Activated T-helper 1 cell treated with anti-CD3 and anti-CD28 coated beads, Interleukin-12 subunit alpha, Interleukin-12 subunit beta, Interleukin-2, Interleukin-4 antibody, amounts not matched to agents 30 ng/mL and 10 ng/mL and 1 ng/mL, durations not matched to agents 14 hours and 24 hours and 36 hours (primary cell): ENCODE measurements at regions of chr19 and their contacts with region 1.

Region 1: DNA sequence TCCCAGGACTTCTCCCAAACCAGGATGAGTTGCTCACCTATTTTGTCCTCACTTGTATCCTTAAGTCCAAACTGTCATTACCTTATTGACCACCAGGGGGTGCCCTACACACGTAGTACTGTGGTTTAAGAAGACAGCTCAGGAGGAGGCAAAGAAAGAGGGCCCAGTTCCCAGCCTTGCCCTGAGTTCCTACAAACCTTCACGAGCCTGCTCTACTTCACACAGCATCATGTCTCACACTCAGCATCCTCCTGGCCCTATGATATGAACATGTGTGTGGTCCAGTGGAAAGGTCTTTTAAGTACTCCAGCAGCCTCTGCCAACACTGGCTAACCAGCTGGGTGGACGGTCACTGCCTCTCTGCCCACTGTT is 8.1 kb upstream of the ZNF784 start:
- DNase-seq: peak; percentile 82
- H3K4me3 Mint-ChIP-seq: no peak overlapping the region
- H3K27ac Mint-ChIP-seq: peak overlapping the region; percentile 68
- H3K4me1 Mint-ChIP-seq: peaks cover 47% of the 10 kb centered on the region
- H3K27me3 Mint-ChIP-seq: peaks cover 20% of the 10 kb centered on the region

Region 2: DNA sequence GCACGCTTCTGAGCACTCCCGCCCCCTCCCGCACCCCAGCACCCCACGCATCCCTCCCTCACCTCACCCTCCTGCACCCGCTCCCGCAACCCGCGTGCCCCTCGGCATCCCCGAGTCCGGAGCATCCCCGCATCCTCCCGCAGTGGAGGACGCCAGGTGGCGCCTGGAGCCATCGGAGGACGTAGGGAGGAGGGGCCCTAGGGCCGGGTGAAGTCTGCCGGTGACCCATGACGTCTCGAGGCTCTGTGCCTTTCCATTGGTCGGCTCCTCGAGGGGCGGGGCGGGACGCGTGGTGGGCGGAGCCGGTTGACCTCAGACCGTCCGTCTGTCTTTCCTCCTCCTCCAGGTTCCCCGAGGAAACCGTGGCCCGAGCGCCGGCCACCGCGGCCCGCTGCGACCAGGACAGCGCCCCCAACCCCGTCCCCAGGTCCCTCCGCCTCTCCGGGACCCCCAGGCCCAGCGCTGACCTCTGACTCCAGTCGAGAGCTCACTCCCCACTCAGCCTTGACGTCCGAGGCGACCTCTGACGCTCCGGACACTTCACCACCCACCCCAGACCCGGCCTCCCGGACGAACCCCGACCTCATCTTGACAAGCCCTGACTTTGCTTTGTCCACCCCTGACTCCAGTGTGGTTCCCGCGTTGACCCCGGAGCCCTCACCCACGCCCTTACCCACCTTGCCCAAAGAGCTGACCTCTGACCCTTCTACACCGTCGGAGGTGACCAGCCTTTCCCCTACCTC is 115.4 kb before region 1 on chr19:
- intact Hi-C with region 1: loop called (anchors 1 kb)
- DNase-seq: peak; percentile 88
- H3K4me3 Mint-ChIP-seq: peak overlapping the region; percentile 66
- H3K27ac Mint-ChIP-seq: peak overlapping the region; percentile 68
- H3K4me1 Mint-ChIP-seq: no peaks in the 10 kb centered on the region
- H3K27me3 Mint-ChIP-seq: peaks cover 2% of the 10 kb centered on the region

Region 3: DNA sequence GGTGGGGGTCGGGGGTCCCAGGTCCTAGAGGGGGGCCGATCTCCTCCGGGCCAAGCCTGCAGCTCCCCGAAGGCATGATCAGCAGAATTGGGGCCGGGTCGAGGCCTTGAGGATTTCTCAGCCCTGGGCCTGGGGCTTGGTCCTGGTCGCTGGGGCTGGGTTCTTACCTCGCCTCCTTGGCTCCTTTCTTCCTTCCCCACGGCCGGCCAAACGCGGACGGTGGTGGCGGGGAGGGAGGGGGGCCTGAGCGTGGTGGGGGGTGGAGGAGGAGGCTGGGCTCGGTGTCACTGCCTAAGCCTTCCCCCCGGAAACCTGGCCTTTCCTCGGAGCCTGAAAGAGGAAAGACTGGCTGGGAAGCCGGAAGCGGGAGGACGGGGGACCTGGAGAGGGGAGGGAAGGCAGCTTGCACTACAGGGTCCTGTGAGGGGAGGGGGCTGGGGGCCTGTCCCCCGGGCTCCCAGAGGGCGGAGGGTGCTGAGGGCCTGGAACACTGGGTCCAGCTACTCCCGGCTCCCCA is 51.8 kb before region 1 on chr19 and contains the start of gene ZNF579:
- intact Hi-C with region 1: loop called (anchors 2 kb)
- DNase-seq: peak; percentile 71
- H3K4me3 Mint-ChIP-seq: peak within 1 kb of the TSS; percentile 91
- H3K27ac Mint-ChIP-seq: peak within 1 kb of the TSS; percentile 83
- H3K4me1 Mint-ChIP-seq: peaks cover 26% of the 10 kb centered on the region
- H3K27me3 Mint-ChIP-seq: peaks cover 13% of the 10 kb centered on the region
- total RNA-seq, gene ZNF579: 10.2 and 11.7 TPM in 2 replicates

Region 4: DNA sequence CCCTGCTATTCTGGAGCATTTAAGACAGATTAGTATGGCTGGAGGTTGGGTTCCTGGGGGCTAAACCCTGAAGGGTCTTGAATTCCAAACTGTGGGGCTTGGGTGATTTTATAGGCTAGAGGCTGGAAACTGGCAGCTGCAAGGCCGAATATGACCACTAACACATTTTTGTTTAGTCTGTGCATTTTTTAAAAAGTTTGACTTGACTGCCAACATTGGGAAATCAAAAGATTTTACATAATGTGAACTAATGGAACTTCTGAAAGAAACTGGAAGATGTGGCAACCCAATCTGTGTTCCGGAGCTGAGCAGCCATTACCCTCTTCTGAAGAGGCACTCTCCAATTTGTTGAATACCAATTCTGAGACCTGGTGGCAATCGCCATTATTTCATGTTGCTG is 13.2 kb before region 1 on chr19:
- intact Hi-C with region 1: no loop called
- DNase-seq: no peak
- H3K4me3 Mint-ChIP-seq: no peak overlapping the region
- H3K27ac Mint-ChIP-seq: no peak overlapping the region
- H3K4me1 Mint-ChIP-seq: peaks cover 21% of the 10 kb centered on the region
- H3K27me3 Mint-ChIP-seq: no peaks in the 10 kb centered on the region

Region 5: GRCh38 chr19:55674841-55675660 is 42.6 kb after region 1 on chr19 and contains the start of gene EPN1:
- intact Hi-C with region 1: loop called (anchors 2 kb)
- DNase-seq: peak; percentile 94
- H3K4me3 Mint-ChIP-seq: peak within 1 kb of the TSS; percentile 98
- H3K27ac Mint-ChIP-seq: peak within 1 kb of the TSS; percentile 95
- H3K4me1 Mint-ChIP-seq: peaks cover 47% of the 10 kb centered on the region
- H3K27me3 Mint-ChIP-seq: no peaks in the 10 kb centered on the region
- total RNA-seq, gene EPN1: 46.0 and 48.3 TPM in 2 replicates